Endothelial cell of umbilical vein (primary cell): ENCODE measurements at regions of chr15 and their contacts with region 1.

Region 1: GRCh38 chr15:75042730-75043508 is 19.5 kb downstream of the PPCDC start:
- DNase-seq: peak; percentile 63
- H3K4me3 ChIP-seq: no peak overlapping the region
- H3K27ac ChIP-seq: peak overlapping the region; percentile 85
- H3K4me1 ChIP-seq: peaks cover 32% of the 10 kb centered on the region
- H3K27me3 ChIP-seq: no peaks in the 10 kb centered on the region
- CTCF ChIP-seq: peak; percentile 49 to 67
- POLR2A ChIP-seq: no peak

Region 2: DNA sequence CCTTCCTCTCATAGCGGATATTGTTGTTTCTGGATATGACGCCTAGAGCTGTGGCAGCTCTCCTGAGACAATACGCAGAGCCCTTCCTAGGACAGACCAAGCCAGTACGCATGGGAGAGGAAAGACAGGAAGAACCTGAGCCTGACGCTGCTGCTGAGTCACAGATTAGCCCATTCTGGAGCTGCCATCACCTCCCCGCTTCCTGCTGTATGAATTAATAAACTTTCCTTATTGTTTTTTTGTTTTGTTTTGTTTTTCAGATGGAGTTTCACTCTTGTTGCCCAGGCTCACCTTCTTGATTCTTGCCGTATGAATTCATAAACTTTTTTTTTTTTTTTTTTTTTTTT is 47.4 kb after region 1 on chr15:
- CTCF ChIA-PET with region 1: interaction called, 8 read pairs
- POLR2A ChIA-PET with region 1: interaction called, 3 read pairs
- dilution Hi-C with region 1: no loop called
- intact Hi-C with region 1: loop called (anchors 1 kb)
- DNase-seq: peak; percentile 93
- H3K4me3 ChIP-seq: no peak overlapping the region
- H3K27ac ChIP-seq: peak overlapping the region; percentile 90
- H3K4me1 ChIP-seq: peaks cover 11% of the 10 kb centered on the region
- H3K27me3 ChIP-seq: no peaks in the 10 kb centered on the region
- CTCF ChIP-seq: no peak
- POLR2A ChIP-seq: peak; percentile 46

Region 3: GRCh38 chr15:75208501-75209288 is 165.8 kb after region 1 on chr15:
- CTCF ChIA-PET with region 1: interaction called, 13 read pairs
- POLR2A ChIA-PET with region 1: interaction called, 8 read pairs
- dilution Hi-C with region 1: no loop called
- intact Hi-C with region 1: loop called (anchors 1 kb)
- DNase-seq: no peak
- H3K4me3 ChIP-seq: no peak overlapping the region
- H3K27ac ChIP-seq: no peak overlapping the region
- H3K4me1 ChIP-seq: peaks cover 11% of the 10 kb centered on the region
- H3K27me3 ChIP-seq: no peaks in the 10 kb centered on the region
- CTCF ChIP-seq: no peak
- POLR2A ChIP-seq: no peak